HAP-1 (cell line): ENCODE measurements at regions of chr15 and their contacts with region 1.

Region 1: DNA sequence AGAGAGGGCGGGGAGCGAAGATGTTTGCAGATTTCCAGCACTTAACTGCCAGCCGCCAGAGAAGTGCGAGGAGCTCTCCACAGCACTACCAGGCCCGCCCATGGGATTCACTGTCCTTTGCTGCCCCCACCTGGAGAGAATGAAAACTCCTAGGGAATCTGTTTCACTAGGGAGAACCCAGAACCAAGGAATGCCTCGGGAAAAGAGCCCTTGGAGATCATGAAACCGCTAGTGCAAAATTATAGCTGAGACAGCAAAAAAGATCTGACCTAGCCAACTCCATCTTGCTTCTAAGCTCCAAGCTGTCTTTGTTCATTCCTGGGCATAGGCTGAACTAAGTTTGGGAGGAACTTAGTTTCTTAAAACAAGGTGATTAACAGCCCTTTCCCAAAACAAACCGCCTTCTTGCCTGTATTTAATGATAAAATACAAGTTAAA is 82.6 kb upstream of the GCNT3 start:
- DNase-seq: peak; percentile 86 to 94
- H3K4me3 ChIP-seq: no peak overlapping the region
- H3K4me1 ChIP-seq: no peaks in the 10 kb centered on the region
- H3K27me3 ChIP-seq: no peaks in the 10 kb centered on the region

Region 2: GRCh38 chr15:59473226-59473625 is 55.8 kb before region 1 on chr15:
- in situ Hi-C with region 1: no loop called
- DNase-seq: no peak
- H3K4me3 ChIP-seq: no peak overlapping the region
- H3K4me1 ChIP-seq: no peaks in the 10 kb centered on the region
- H3K27me3 ChIP-seq: no peaks in the 10 kb centered on the region

Region 3: GRCh38 chr15:59622289-59622688 is 93.3 kb after region 1 on chr15:
- in situ Hi-C with region 1: loop called (anchors 10 kb)
- DNase-seq: peak; percentile 33 to 76
- H3K4me3 ChIP-seq: no peak overlapping the region
- H3K4me1 ChIP-seq: no peaks in the 10 kb centered on the region
- H3K27me3 ChIP-seq: peaks cover 16% of the 10 kb centered on the region